Activated CD8-positive, alpha-beta T cell treated with anti-CD3 and anti-CD28 coated beads for 36 hours (primary cell): ENCODE measurements at regions of chr9 and their contacts with region 1.

Region 1: DNA sequence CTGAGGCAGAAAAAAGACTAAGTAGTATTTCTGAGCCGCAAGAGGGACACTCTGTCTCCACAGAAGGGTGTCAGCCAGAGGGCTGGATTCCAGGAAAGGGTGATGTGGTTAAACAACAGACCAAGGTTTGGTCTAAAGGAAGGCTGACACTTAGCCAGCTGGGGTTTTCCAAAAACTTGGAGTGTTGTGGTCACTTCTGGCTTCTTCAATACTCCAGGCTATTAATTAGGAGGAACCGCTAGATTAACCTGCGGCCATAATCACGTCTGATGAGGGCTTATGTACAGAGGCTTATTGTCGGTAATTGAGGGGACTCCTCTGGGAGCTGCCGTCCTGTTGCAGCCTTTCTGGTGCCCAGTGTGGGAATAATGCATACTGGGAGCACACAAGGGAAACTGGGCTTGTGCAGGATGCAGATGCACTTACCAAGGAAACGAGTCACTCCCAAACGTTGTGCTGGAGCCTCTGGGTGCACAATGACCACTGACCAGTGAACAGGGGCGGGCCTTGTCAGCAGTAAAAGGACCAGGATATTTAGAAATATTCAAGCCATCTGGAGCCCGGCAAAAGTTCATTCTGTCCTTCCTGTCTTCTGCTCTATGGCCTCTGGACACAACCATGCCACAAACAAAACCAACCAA is 70.2 kb upstream of the TUT7 start:
- DNase-seq: no peak
- ATAC-seq: no peak
- H3K4me3 Mint-ChIP-seq: no peak overlapping the region
- H3K27ac Mint-ChIP-seq: no peak overlapping the region
- H3K4me1 Mint-ChIP-seq: no peaks in the 10 kb centered on the region
- H3K27me3 Mint-ChIP-seq: peaks cover 4% of the 10 kb centered on the region
- CTCF ChIP-seq: no peak

Region 2: DNA sequence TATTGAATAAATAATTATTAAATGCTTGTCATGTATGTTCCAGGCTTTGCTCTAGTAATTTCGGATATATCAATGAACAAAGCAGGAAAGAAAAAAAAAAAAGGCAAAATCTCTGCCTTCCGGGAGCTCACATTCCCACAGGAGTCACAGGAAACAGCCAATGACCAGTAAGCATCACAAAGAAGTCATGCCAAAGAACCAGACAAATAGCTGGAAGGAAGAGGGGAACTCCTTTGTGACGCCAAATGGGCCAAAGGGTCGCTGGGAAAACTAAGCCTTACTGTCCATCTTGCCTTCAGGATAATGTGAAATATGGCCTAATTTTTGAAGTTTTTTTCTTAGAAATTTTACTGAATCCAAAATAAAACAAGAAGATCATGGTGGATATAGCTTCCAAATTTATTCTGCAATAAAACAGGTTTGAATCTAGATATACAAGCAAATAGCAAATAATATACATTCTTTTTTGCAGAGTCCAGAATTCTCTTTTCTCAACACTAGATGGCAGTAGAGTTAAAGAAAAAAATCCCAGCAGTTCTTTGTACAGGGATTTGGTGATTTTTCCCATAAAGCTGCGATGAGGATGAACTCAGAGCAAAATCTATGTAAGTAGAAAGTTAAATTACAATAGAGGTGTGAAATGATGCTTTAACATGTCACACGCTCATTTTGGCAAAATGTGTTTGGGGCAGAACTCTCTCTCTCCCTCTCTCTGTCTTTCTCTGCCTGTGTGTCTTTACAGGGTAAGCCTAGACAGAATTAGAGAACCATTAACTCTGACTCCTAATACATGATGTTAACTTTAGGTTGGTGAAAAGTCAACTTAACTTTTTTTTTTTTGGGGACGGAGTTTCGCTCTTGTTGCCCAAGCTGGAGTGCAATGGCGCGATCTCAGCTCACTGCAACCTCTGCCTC is 10.1 kb before region 1 on chr9:
- CTCF ChIA-PET with region 1: interaction called, 12 read pairs
- POLR2A ChIA-PET with region 1: no interaction called
- intact Hi-C with region 1: no loop called
- DNase-seq: no peak
- ATAC-seq: no peak
- H3K4me3 Mint-ChIP-seq: no peak overlapping the region
- H3K27ac Mint-ChIP-seq: no peak overlapping the region
- H3K4me1 Mint-ChIP-seq: no peaks in the 10 kb centered on the region
- H3K27me3 Mint-ChIP-seq: peaks cover 7% of the 10 kb centered on the region
- CTCF ChIP-seq: peak; percentile 86